WTC11 (cell line): ENCODE measurements at regions of chr19 and their contacts with region 1.

Region 1: DNA sequence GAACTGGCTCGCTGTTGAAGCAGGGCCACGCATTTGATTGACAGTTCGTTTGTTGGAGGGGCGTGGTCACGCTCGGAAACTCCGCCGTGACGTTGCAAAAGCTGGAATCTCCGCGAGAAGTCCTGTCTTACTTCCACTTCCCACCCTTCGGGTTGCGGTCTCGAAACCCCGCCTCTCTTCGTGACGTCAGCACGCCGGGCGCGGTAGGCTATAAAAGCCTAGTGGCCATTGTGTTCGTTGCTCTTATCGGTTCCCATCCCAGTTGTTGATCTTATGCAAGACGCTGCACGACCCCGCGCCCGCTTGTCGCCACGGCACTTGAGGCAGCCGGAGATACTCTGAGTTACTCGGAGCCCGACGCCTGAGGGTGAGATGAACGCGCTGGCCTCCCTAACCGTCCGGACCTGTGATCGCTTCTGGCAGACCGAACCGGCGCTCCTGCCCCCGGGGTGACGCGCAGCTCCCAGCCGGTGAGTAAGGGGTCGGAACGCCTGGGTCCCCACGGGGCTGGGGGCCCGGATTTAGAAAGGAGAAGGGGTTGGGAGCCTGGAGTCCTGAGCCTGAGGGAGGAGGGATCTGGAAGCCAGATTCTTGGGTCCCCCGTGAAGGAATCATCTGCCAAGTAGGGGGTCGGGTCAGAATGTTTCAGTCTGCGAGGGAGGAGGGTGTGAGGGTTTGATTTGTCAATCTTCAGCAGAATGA is at the start of gene PPP1R15A:
- DNase-seq: peak; percentile 99
- ATAC-seq: peak; percentile 73
- H3K4me3 Mint-ChIP-seq: peak within 1 kb of the TSS; percentile 100
- H3K27ac Mint-ChIP-seq: peak within 1 kb of the TSS; percentile 100
- H3K4me1 Mint-ChIP-seq: peaks cover 33% of the 10 kb centered on the region
- H3K27me3 Mint-ChIP-seq: no peaks in the 10 kb centered on the region
- CTCF ChIP-seq: no peak
- total RNA-seq, gene PPP1R15A: 17.0 to 19.5 TPM (median 17.9 TPM) in 3 replicates

Region 2: DNA sequence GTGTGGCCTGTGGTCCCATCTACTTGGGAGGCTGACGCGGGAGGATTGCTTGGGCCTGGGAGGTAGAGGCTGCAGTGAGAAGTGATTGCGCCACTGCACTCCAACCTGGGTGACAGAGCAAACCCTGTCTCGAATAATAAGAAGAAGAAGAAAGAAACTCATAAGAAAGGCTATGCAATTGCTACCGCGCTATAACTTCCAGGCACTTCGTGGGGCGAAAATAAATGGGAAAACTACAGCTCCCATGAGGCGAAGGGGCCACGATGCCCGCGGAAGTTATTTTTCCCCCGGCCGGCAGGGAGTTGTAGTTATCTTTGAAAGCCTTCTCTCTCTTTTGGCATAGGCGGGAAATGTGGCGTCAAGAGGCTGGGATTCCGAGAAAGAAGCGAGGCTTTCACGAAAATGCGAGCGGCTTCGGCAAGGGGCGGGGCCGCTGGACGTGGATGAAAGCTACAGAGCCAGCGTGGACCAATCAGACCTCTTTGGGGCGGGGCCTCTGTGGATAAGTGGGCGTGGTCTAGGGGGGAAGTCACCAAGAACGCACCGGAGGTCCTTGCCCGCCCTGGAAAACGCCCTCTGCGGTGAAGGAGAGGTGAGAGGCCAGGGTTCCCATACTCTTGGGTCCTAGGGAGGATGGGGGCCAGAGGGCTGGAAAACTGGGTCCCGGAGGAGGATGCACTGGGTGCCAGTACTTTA is 27.6 kb after region 1 on chr19 and contains the start of gene NUCB1:
- CTCF ChIA-PET with region 1: interaction called, 4 read pairs
- POLR2A ChIA-PET with region 1: interaction called, 12 read pairs
- DNase-seq: peak; percentile 100
- ATAC-seq: peak; percentile 87
- H3K4me3 Mint-ChIP-seq: peak within 1 kb of the TSS; percentile 97
- H3K27ac Mint-ChIP-seq: peak within 1 kb of the TSS; percentile 99
- H3K4me1 Mint-ChIP-seq: peaks cover 11% of the 10 kb centered on the region
- H3K27me3 Mint-ChIP-seq: peaks cover 9% of the 10 kb centered on the region
- CTCF ChIP-seq: no peak
- total RNA-seq, gene NUCB1: 145 to 153 TPM (median 149 TPM) in 3 replicates

Region 3: DNA sequence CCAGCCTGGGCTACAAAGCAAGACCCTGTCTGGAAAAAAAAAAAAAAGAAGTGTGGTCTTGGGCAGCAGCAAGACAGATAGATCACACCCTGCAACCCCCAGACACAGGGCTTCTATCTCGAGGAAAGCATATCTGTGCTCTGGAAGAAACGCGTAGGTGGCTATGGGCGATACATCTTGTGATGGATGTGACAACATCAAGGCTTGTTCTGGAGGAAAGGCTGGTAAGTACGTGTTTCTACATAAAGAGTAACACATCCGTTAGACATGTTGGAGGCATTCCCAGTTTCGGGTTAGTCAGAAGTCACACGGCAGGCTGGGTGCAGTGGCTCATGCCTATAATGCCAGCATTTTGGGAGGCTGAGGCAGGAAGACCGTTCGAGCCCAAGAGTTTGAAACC is 54.6 kb after region 1 on chr19:
- CTCF ChIA-PET with region 1: no interaction called
- POLR2A ChIA-PET with region 1: no interaction called
- DNase-seq: no peak
- ATAC-seq: no peak
- H3K4me3 Mint-ChIP-seq: no peak overlapping the region
- H3K27ac Mint-ChIP-seq: peak overlapping the region; percentile 57; the same call in 1 of the 2 replicates
- H3K4me1 Mint-ChIP-seq: no peaks in the 10 kb centered on the region
- H3K27me3 Mint-ChIP-seq: peaks cover 20% of the 10 kb centered on the region
- CTCF ChIP-seq: no peak